Common myeloid progenitor, CD34-positive (primary cell): ENCODE measurements at regions of chrX and their contacts with region 1.

Region 1: GRCh38 chrX:50691820-50692219 is 122.2 kb downstream of the SHROOM4 start:
- DNase-seq: peak; percentile 50 to 78 (median 75)
- H3K4me3 ChIP-seq: no peak overlapping the region
- H3K27ac ChIP-seq: no peak overlapping the region
- H3K4me1 ChIP-seq: no peaks in the 10 kb centered on the region
- H3K27me3 ChIP-seq: peaks cover 0 to 3% (median 0%) of the 10 kb centered on the region in 5 experiments

Region 2: DNA sequence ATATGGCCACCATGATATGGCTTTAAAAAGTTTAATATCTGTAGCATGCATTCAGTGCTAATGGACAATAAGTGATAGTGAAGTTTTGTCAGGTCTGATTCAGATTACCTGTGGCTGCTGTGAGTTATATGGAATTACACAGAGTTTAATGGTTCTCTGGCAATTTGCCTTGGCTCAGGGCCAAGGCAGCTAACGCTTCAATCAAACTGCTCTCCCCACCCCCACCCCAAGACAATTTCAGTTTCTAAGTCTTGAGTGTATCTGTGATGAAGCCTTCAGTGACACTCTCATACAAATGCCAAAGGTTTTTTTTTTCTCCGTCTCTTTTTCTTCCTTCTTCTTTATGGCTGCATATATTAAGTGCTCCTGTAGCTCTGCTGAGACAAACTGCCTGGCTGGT is 15.6 kb after region 1 on chrX:
- CTCF ChIA-PET with region 1: no interaction called
- POLR2A ChIA-PET with region 1: no interaction called
- DNase-seq: no peak
- H3K4me3 ChIP-seq: no peak overlapping the region
- H3K27ac ChIP-seq: no peak overlapping the region
- H3K4me1 ChIP-seq: peaks cover 0 to 2% (median 0%) of the 10 kb centered on the region in 4 experiments
- H3K27me3 ChIP-seq: peaks cover 0 to 5% (median 0%) of the 10 kb centered on the region in 5 experiments

Region 3: GRCh38 chrX:50988649-50989048 is 296.8 kb after region 1 on chrX:
- CTCF ChIA-PET with region 1: interaction called, 13 read pairs
- POLR2A ChIA-PET with region 1: no interaction called
- DNase-seq: peak; percentile 10 to 47 (median 31)
- H3K4me3 ChIP-seq: no peak overlapping the region
- H3K27ac ChIP-seq: no peak overlapping the region
- H3K4me1 ChIP-seq: no peaks in the 10 kb centered on the region
- H3K27me3 ChIP-seq: peaks cover 0 to 11% (median 4%) of the 10 kb centered on the region in 5 experiments